Endothelial cell of umbilical vein (primary cell): ENCODE measurements at regions of chr1 and their contacts with region 1.

Region 1: GRCh38 chr1:18913065-18913835 is 10.9 kb upstream of the ALDH4A1 start:
- DNase-seq: peak; percentile 89
- H3K4me3 ChIP-seq: no peak overlapping the region
- H3K27ac ChIP-seq: peak overlapping the region; percentile 96
- H3K4me1 ChIP-seq: peaks cover 11% of the 10 kb centered on the region
- H3K27me3 ChIP-seq: no peaks in the 10 kb centered on the region
- CTCF ChIP-seq: peak; percentile 100
- POLR2A ChIP-seq: no peak

Region 2: GRCh38 chr1:18464665-18465050 is 448.6 kb before region 1 on chr1:
- CTCF ChIA-PET with region 1: no interaction called
- POLR2A ChIA-PET with region 1: no interaction called
- dilution Hi-C with region 1: no loop called
- intact Hi-C with region 1: no loop called
- DNase-seq: no peak
- H3K4me3 ChIP-seq: no peak overlapping the region
- H3K27ac ChIP-seq: no peak overlapping the region
- H3K4me1 ChIP-seq: no peaks in the 10 kb centered on the region
- H3K27me3 ChIP-seq: no peaks in the 10 kb centered on the region
- CTCF ChIP-seq: no peak
- POLR2A ChIP-seq: no peak

Region 3: DNA sequence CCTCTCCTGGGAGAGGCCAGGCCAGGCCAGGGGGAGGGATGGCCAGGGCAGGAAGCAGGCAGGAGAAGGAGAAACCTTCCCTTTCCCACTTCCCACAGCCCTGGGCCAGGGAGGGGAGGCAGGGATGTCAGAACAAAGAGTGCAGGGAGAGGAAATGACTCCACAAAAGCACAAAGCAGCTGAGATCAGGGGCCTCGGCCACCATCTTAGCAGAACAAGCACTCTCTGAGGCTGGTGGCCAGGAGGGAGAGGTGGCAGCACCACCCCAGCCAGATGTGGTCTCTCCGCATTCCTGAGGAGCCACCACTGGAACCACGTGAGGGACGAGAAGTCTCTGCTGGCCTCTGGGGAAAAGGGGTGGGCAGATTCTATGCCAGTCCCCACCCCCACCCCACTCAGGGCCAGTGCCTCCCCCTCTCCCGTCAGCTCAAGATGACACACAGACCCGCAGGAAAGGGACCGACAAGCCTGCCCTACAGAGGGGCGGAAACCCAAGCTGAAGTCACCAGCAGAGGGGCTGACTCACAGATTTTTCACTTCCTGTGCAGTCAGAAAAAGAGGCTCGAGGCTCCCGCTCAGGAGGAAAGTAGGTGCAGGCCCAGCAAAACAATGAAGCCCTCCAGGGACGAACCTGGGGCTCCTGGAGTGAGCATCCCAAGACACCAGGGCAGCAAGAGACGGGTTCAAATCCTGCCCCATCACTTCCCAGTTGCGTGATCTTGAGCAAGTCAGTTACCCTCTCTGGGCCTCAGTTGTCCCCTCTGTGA is 13.2 kb after region 1 on chr1:
- CTCF ChIA-PET with region 1: interaction called, 135 read pairs
- POLR2A ChIA-PET with region 1: interaction called, 7 read pairs
- dilution Hi-C with region 1: no loop called
- intact Hi-C with region 1: loop called (anchors 1 kb)
- DNase-seq: peak; percentile 95
- H3K4me3 ChIP-seq: no peak overlapping the region
- H3K27ac ChIP-seq: peak overlapping the region; percentile 97
- H3K4me1 ChIP-seq: peaks cover 66% of the 10 kb centered on the region
- H3K27me3 ChIP-seq: no peaks in the 10 kb centered on the region
- CTCF ChIP-seq: no peak
- POLR2A ChIP-seq: peak; percentile 44

Region 4: GRCh38 chr1:18956369-18957135 is 43.3 kb after region 1 on chr1 and contains the start of gene IFFO2:
- CTCF ChIA-PET with region 1: interaction called, 113 read pairs
- POLR2A ChIA-PET with region 1: interaction called, 7 read pairs
- dilution Hi-C with region 1: no loop called
- intact Hi-C with region 1: loop called (anchors 1 kb)
- DNase-seq: peak; percentile 93
- H3K4me3 ChIP-seq: peak within 1 kb of the TSS; percentile 84 to 89 (median 86)
- H3K27ac ChIP-seq: peak within 1 kb of the TSS; percentile 82
- H3K4me1 ChIP-seq: peaks cover 25% of the 10 kb centered on the region
- H3K27me3 ChIP-seq: peaks cover 4 to 9% of the 10 kb centered on the region in 2 experiments
- CTCF ChIP-seq: no peak
- POLR2A ChIP-seq: peak; percentile 88
- total RNA-seq, gene IFFO2: 31.1 and 35.1 TPM in 2 replicates

Region 5: DNA sequence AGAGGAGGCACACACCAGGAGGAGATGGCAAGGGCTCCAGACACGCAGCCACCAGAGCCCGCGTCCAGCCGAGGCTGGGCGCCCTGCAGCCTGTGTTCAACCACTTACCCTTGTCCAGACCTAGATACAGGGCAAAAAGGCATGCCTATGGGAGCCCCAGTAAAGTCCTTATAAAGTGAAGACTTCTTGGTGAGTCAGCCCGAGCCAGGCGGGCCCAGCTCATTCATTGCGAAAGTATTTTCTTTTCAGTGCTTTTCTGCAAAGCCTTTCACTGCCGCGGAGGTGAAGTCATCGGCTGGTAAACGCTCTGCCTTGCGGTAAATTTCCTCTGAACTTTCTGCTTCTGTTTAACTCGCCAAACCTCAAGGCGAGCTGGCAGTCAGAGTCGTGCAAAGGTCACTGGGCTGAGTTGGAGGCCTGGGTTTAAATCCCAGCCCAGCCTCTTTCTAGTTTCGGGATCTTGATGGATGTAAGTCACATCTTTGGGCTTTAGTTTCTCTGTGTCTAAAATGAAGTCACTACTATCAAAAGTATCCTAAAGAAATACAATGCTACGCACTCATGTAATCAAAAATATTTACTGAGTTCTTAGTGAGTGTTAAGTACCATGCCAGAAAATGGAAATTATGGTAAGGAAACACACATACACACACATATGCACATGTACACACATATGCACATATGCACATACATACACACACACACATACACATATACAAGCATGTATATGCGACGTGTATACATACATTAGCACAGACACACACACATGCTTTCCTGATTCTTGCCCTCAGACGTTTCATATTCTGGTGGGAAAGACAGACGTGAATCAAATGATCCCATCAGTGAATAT is 98.0 kb after region 1 on chr1:
- CTCF ChIA-PET with region 1: interaction called, 26 read pairs
- POLR2A ChIA-PET with region 1: no interaction called
- dilution Hi-C with region 1: no loop called
- intact Hi-C with region 1: loop called (anchors 1 kb)
- DNase-seq: peak; percentile 89
- H3K4me3 ChIP-seq: no peak overlapping the region
- H3K27ac ChIP-seq: peak overlapping the region; percentile 84
- H3K4me1 ChIP-seq: peaks cover 31% of the 10 kb centered on the region
- H3K27me3 ChIP-seq: no peaks in the 10 kb centered on the region
- CTCF ChIP-seq: no peak
- POLR2A ChIP-seq: no peak

Region 6: DNA sequence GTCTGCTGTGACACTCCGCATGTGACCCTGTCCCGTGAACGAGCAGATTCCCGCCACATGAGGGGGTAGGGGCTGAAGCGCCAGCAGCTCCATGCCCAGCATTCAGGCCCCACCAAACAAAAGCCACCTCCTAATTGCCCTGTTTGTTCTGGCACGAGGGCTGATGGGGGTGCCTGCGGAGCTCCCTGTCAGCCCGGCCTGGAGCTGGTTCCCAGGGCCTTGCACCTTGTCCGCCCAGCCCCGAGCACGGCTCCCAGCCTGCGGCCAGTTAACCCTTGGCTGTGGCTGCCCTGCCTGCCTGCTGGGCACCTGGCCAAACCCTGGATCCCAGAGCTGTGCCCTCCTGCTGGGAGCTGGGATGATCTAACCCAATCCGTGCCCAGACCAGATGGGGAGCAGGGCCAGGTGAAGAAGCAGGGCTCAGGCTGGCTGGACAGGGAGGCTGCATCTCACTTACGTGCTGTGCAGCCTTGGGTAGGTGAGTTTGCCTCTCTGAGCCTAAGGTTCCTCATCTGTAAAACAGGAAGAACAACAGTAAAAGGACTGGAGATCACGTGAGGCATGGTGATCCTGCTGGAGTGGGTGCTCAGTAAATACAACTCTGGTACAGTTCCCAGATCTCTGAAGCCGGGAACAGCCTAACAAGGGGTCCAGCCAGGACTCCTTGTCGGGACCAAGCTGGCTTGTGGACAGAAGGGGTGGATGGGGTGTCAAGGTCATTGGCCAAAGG is 154.1 kb after region 1 on chr1:
- CTCF ChIA-PET with region 1: interaction called, 14 read pairs
- POLR2A ChIA-PET with region 1: no interaction called
- dilution Hi-C with region 1: no loop called
- intact Hi-C with region 1: no loop called
- DNase-seq: no peak
- H3K4me3 ChIP-seq: no peak overlapping the region
- H3K27ac ChIP-seq: no peak overlapping the region
- H3K4me1 ChIP-seq: no peaks in the 10 kb centered on the region
- H3K27me3 ChIP-seq: no peaks in the 10 kb centered on the region
- CTCF ChIP-seq: no peak
- POLR2A ChIP-seq: no peak

Region 7: DNA sequence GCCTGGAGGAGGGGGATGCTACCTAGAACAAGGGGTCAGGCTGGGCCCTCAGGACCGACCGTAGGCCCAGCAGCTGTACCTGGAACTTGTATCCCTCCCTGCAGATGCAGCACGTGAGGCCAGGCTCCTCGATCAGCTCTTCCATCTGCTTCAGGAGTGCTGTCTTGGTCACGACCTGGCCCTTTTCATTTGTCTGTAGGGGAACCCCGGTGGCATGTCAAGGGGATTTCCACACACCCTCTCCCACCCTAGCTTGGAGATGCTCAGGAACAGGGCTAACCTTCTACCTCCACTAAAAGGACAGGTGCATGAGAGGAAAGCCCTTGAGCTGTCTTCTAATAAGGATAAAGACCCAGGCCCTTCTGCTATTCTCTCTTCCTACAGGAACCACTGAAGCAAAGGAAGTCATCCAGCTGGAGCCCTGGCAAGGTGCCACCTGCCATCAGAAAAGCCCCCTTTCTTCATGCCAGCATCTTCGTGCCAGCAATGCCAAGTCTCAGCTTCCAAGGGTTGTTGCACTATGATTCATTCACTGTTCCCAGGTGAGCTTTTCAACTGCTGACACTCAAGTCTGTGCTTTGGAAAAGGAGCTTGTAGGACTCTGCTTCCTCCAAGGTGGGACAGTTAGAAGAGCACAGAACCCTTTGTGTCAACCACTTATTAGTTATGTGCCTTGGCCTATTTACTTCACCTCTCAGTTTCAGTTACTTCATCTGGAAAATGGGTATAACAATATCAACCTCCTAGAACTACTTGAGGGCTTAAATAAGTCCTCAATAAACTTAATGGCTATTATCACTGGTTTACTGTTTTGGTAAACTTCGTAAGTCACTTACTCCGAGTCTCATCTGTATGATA is 174.7 kb after region 1 on chr1:
- CTCF ChIA-PET with region 1: interaction called, 62 read pairs
- POLR2A ChIA-PET with region 1: interaction called, 4 read pairs
- dilution Hi-C with region 1: no loop called
- intact Hi-C with region 1: loop called (anchors 1 kb)
- DNase-seq: no peak
- H3K4me3 ChIP-seq: no peak overlapping the region
- H3K27ac ChIP-seq: no peak overlapping the region
- H3K4me1 ChIP-seq: peaks cover 15% of the 10 kb centered on the region
- H3K27me3 ChIP-seq: no peaks in the 10 kb centered on the region
- CTCF ChIP-seq: no peak
- POLR2A ChIP-seq: no peak